ENCODE measurements at regions of chr3 and their contacts with region 1.

Region 1: DNA sequence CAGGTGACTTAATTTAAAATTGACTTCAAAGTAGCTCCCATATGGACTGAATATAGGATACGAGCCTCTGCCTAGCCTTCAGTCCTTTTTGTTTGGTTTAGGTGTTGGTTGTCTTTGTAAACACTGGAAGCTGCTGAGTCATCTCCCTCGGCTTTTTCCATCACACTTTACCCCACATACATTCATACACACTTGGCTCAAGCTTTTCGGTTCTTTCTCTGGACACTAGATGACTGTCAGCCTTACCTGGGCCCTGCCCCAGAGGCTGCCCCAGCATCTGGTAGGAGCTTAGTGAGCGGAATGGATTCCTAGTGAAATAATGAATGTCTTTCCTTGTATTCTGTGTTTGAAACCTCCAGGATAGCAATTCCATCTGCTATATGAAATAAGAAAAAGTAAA is 201.4 kb upstream of the IL12A start:
- DNase-seq: peak; percentile 66
- H3K4me3 Mint-ChIP-seq: peak overlapping the region; percentile 32
- H3K27ac Mint-ChIP-seq: peak overlapping the region; percentile 71
- H3K4me1 Mint-ChIP-seq: peaks cover 84% of the 10 kb centered on the region
- H3K27me3 Mint-ChIP-seq: no peaks in the 10 kb centered on the region
- CTCF ChIP-seq: no peak

Region 2: GRCh38 chr3:159169828-159170227 is 617.4 kb before region 1 on chr3:
- CTCF ChIA-PET with region 1: no interaction called
- intact Hi-C with region 1: loop called (anchors 10 kb)
- DNase-seq: peak; percentile 25
- H3K4me3 Mint-ChIP-seq: no peak overlapping the region
- H3K27ac Mint-ChIP-seq: peak overlapping the region; percentile 96
- H3K4me1 Mint-ChIP-seq: peaks cover 66% of the 10 kb centered on the region
- H3K27me3 Mint-ChIP-seq: no peaks in the 10 kb centered on the region
- CTCF ChIP-seq: no peak

Region 3: DNA sequence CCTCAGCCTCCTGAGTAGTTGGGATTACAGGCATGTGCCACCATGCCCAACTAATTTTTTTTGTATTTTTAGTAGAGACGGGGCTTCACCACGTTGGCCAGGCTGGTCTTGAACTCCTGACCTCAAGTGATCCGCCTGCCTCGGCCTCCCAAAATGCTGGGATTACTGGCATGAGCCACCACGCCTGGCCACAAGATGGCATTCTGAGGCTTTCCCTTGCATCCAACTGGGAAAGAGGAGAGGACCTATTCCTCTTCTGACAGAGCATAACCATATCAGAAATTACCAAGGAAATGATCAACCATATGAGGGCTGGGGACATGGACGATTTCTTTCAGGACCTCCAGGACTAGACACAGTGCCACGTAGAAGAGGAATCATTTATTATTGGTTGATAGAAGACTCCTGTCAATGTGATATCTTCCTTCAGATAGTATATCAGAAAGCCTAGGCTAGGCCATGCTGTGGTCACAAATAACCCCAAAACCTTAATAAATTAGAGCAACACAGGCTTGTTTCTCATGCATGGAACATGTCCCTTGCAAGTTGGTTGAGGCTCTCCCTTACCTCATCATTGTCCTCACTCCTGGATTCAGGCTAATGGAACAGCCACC is 170.9 kb before region 1 on chr3:
- CTCF ChIA-PET with region 1: no interaction called
- intact Hi-C with region 1: loop called (anchors 5 kb)
- DNase-seq: peak; percentile 81
- H3K4me3 Mint-ChIP-seq: no peak overlapping the region
- H3K27ac Mint-ChIP-seq: no peak overlapping the region
- H3K4me1 Mint-ChIP-seq: peaks cover 12% of the 10 kb centered on the region
- H3K27me3 Mint-ChIP-seq: no peaks in the 10 kb centered on the region
- CTCF ChIP-seq: peak; percentile 84

Region 4: GRCh38 chr3:159763602-159764489 is 23.3 kb before region 1 on chr3:
- CTCF ChIA-PET with region 1: interaction called, 11 read pairs
- intact Hi-C with region 1: loop called (anchors 1 kb)
- DNase-seq: peak; percentile 95
- H3K4me3 Mint-ChIP-seq: peak overlapping the region; percentile 92
- H3K27ac Mint-ChIP-seq: peak overlapping the region; percentile 85
- H3K4me1 Mint-ChIP-seq: peaks cover 56% of the 10 kb centered on the region
- H3K27me3 Mint-ChIP-seq: no peaks in the 10 kb centered on the region
- CTCF ChIP-seq: peak; percentile 50

Region 5: GRCh38 chr3:159775372-159775961 is 11.7 kb before region 1 on chr3:
- CTCF ChIA-PET with region 1: interaction called, 14 read pairs
- intact Hi-C with region 1: no loop called
- DNase-seq: peak; percentile 70
- H3K4me3 Mint-ChIP-seq: no peak overlapping the region
- H3K27ac Mint-ChIP-seq: peak overlapping the region; percentile 6
- H3K4me1 Mint-ChIP-seq: peaks cover 41% of the 10 kb centered on the region
- H3K27me3 Mint-ChIP-seq: no peaks in the 10 kb centered on the region
- CTCF ChIP-seq: no peak

Region 6: DNA sequence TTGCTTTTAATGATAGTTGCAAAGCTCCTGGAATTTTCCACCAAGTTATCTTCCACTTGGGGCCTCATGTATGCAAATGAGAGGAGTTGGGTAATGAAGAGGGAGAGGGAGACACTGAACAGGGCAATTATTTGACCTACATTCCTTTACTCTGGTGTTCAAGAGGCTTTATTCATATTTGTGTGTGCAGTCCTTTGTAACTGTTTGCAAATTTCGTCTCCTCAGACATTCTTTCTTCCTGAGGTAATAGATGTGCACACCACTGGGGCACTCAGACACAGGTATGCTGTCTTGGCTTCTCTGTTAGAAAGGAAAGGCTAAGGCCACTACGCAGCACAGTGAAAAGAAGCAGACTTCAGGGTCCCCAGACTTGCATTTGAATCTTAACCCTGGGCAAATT is 11.8 kb after region 1 on chr3:
- CTCF ChIA-PET with region 1: interaction called, 42 read pairs
- intact Hi-C with region 1: loop called (anchors 1 kb)
- DNase-seq: peak; percentile 48
- H3K4me3 Mint-ChIP-seq: no peak overlapping the region
- H3K27ac Mint-ChIP-seq: peak overlapping the region; percentile 9
- H3K4me1 Mint-ChIP-seq: peaks cover 49% of the 10 kb centered on the region
- H3K27me3 Mint-ChIP-seq: no peaks in the 10 kb centered on the region
- CTCF ChIP-seq: no peak

Region 7: GRCh38 chr3:160150525-160150924 is 363.3 kb after region 1 on chr3:
- CTCF ChIA-PET with region 1: no interaction called
- intact Hi-C with region 1: no loop called
- DNase-seq: no peak
- H3K4me3 Mint-ChIP-seq: no peak overlapping the region
- H3K27ac Mint-ChIP-seq: no peak overlapping the region
- H3K4me1 Mint-ChIP-seq: no peaks in the 10 kb centered on the region
- H3K27me3 Mint-ChIP-seq: no peaks in the 10 kb centered on the region
- CTCF ChIP-seq: no peak

Measured in Calu3 (cell line).